CD4-positive, alpha-beta T cell (primary cell): ENCODE measurements at regions of chr17 and their contacts with region 1.

Region 1: GRCh38 chr17:28726226-28727130 is at the start of gene TLCD1:
- DNase-seq: peak; percentile 82 to 94 (median 86)
- ATAC-seq: peak; percentile 43
- H3K4me3 ChIP-seq: peak within 1 kb of the TSS; percentile 75
- H3K4me3 Mint-ChIP-seq: peak within 1 kb of the TSS; percentile 98
- H3K27ac ChIP-seq: peak within 1 kb of the TSS; percentile 99 to 100
- H3K27ac Mint-ChIP-seq: peak within 1 kb of the TSS; percentile 100
- H3K4me1 ChIP-seq: peaks cover 66% of the 10 kb centered on the region
- H3K4me1 Mint-ChIP-seq: peaks cover 64% of the 10 kb centered on the region
- H3K27me3 ChIP-seq: no peaks in the 10 kb centered on the region
- H3K27me3 Mint-ChIP-seq: no peaks in the 10 kb centered on the region
- CTCF ChIP-seq: peak; percentile 99
- total RNA-seq, gene TLCD1: 0.39 to 0.60 TPM

Region 2: DNA sequence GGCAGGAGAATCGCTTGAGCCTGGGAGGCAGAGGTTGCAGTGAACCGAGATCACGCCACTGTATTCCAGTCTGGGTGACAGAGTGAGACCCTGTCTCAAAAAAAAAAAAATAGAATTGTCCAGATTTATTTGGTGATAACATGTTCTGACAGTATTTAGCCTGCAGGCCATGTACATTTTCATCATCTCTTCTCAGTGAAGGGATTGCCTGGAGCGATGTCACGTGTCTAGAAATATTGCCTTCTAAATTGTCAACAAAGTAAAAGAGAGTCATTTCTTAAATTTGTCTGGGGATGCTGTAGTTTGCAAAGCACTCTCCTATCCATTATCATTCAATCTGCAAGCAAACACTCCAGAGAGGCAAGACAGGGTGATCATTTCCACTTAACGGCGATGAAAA is 701.7 kb before region 1 on chr17:
- CTCF ChIA-PET with region 1: no interaction called
- POLR2A ChIA-PET with region 1: no interaction called
- intact Hi-C with region 1: no loop called
- DNase-seq: no peak
- ATAC-seq: no peak
- H3K4me3 ChIP-seq: no peak overlapping the region
- H3K4me3 Mint-ChIP-seq: no peak overlapping the region
- H3K27ac ChIP-seq: no peak overlapping the region
- H3K27ac Mint-ChIP-seq: no peak overlapping the region
- H3K4me1 ChIP-seq: no peaks in the 10 kb centered on the region
- H3K4me1 Mint-ChIP-seq: no peaks in the 10 kb centered on the region
- H3K27me3 ChIP-seq: no peaks in the 10 kb centered on the region
- H3K27me3 Mint-ChIP-seq: peaks cover 5% of the 10 kb centered on the region
- CTCF ChIP-seq: no peak

Region 3: DNA sequence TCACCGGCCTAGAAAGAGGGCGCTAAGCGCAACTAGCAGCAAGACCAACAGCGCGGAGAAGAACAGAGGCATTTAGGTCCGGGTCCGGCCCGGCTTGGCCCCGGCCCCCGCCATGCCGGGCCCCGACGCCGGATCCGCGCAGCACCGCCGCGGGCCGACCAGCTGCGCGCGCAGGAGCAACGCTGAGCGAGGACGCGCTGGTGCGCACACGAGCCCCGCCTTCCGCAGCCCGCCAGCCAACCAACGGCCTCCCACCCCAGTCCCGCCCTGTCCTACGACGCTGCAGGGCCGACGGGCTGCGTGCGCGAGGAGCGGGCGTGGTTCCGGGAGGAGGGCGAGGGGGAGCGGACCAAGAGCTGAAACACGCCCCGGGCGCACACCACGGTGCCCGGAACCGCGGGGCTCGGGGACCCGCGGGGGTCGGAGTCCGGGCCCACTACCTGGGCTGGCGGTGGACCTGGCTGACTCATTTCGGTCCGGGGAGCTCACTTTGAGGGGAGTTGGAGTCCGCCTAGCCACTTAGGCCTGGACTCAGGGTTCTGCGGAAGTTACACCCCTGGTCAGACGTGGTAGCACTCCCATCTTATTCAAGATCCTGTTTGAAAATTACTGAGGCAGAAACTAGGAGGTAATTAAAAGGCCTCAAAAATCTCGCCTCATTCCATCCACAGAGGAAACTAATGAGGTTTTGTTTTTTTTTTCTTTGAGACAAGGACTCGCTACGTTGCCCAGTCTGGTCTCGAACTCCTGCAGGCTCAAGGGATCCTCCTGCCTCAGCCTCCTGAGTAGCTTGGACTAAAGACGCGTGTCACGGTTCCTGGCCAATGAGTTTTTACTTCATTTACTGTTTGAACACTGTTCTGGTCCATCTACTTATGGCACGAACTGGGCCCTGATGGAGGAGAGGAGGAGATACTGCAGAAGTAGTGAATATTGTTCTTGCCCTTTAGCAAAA is 81.2 kb before region 1 on chr17 and contains the start of gene BLTP2:
- CTCF ChIA-PET with region 1: interaction called, 14 read pairs
- POLR2A ChIA-PET with region 1: interaction called, 19 read pairs
- intact Hi-C with region 1: loop called in 1 of 2 experiments (anchors 5 kb)
- DNase-seq: peak; percentile 90 to 99 (median 96)
- ATAC-seq: peak; percentile 96
- H3K4me3 ChIP-seq: peak within 1 kb of the TSS; percentile 94
- H3K4me3 Mint-ChIP-seq: peak within 1 kb of the TSS; percentile 93
- H3K27ac ChIP-seq: peak within 1 kb of the TSS; percentile 76 to 96
- H3K27ac Mint-ChIP-seq: peak within 1 kb of the TSS; percentile 96
- H3K4me1 ChIP-seq: peaks cover 50% of the 10 kb centered on the region
- H3K4me1 Mint-ChIP-seq: peaks cover 38% of the 10 kb centered on the region
- H3K27me3 ChIP-seq: no peaks in the 10 kb centered on the region
- H3K27me3 Mint-ChIP-seq: no peaks in the 10 kb centered on the region
- CTCF ChIP-seq: no peak
- total RNA-seq, gene BLTP2: 120 to 124 TPM

Region 4: DNA sequence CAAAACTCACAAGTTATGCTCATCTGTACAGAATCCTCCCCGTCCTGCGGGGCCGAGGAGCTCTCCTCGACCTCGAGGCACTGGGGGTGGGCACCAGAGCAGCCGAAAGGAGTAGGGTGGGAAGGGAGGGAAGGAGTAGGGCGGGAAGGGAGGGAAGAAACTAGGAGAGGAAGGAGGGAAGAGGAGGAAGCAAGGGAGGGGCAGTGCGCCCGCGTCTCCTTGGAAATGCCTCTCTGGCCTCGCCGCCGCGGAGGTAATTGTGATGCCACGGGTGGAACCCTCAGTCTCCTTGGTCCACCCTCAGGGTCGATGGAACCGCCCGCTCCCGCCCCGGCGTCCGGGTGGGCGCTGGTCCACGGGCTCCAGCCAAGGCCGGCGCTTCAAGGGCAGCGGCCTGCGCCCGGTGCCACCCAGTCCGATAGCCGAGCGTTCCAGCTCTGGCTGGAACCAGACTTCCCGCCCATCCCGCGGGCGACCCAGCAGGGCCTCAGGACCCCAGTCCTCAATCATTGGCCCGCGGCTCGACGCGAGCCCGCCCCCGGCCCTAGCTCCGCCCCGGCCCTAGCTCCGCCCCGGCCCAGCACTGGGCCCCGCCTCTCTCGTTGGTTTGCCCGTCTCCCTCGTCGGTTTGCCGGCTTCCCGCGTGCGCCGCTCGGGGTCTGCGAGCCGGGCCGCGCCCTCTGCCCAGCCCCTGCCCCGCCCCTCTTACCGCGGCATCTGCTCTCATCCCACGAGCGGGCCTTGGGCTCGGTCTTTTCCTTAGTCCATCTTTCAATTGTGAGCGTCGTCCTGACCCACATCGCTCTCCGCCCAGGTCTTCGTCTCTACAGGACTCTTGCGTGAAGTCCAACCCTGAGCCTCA is 15.4 kb before region 1 on chr17:
- CTCF ChIA-PET with region 1: interaction called, 24 read pairs
- POLR2A ChIA-PET with region 1: interaction called, 110 read pairs
- intact Hi-C with region 1: no loop called
- DNase-seq: peak; percentile 78 to 93 (median 86)
- ATAC-seq: peak; percentile 92
- H3K4me3 ChIP-seq: peak overlapping the region; percentile 72
- H3K4me3 Mint-ChIP-seq: peak overlapping the region; percentile 94
- H3K27ac ChIP-seq: peak overlapping the region; percentile 68 to 73
- H3K27ac Mint-ChIP-seq: peak overlapping the region; percentile 87
- H3K4me1 ChIP-seq: peaks cover 18% of the 10 kb centered on the region
- H3K4me1 Mint-ChIP-seq: peaks cover 20% of the 10 kb centered on the region
- H3K27me3 ChIP-seq: peaks cover 4 to 5% of the 10 kb centered on the region in 2 experiments
- H3K27me3 Mint-ChIP-seq: peaks cover 17% of the 10 kb centered on the region
- CTCF ChIP-seq: no peak

Region 5: DNA sequence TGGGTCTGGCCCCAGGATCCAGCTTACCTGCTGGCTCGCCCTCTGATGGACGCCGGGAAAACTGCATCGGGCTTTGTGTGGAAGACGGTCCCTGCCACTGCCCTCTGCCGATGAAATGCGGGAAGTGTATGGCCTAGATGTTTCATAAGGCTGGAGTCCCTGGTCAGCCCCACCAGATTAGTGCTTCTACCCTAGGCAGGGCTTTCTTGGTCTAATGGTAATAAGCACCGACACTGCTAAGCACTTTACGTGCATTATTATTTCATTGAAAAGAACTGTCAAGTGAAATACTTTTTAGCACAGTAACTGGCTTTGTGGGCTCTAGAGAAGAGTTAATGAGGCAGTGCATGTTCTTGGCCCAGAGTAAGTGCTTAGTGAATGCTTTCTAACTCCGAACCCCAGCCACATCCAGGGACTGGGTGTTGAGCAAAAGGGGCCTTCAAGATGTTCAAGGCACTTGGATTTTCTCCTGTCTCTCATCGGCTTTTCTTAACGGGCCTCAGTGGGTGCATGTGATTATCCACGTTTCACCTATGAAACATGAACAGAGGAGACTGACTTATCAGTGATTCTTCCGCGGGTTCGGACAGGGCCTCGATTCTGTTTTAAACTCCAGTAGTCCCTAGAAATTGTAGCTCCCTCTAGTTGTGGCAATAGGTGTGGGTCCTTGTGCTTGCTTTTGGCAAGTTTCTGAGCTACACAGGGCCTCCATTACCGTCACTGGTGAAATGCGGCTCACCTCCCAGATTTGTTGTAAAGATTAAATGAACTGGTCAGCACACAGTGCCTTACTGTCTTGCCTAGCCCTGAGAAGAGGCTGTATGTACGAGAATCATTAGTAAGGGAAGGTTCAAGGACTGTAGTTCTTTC is 23.9 kb after region 1 on chr17:
- CTCF ChIA-PET with region 1: interaction called, 373 read pairs
- POLR2A ChIA-PET with region 1: interaction called, 268 read pairs
- intact Hi-C with region 1: loop called (anchors 1 kb)
- DNase-seq: peak; percentile 82 to 94 (median 86)
- ATAC-seq: peak; percentile 90
- H3K4me3 ChIP-seq: no peak overlapping the region
- H3K4me3 Mint-ChIP-seq: peak overlapping the region; percentile 42
- H3K27ac ChIP-seq: no peak overlapping the region
- H3K27ac Mint-ChIP-seq: peak overlapping the region; percentile 70
- H3K4me1 ChIP-seq: peaks cover 27% of the 10 kb centered on the region
- H3K4me1 Mint-ChIP-seq: peaks cover 21% of the 10 kb centered on the region
- H3K27me3 ChIP-seq: no peaks in the 10 kb centered on the region
- H3K27me3 Mint-ChIP-seq: no peaks in the 10 kb centered on the region
- CTCF ChIP-seq: peak; percentile 100

Region 6: DNA sequence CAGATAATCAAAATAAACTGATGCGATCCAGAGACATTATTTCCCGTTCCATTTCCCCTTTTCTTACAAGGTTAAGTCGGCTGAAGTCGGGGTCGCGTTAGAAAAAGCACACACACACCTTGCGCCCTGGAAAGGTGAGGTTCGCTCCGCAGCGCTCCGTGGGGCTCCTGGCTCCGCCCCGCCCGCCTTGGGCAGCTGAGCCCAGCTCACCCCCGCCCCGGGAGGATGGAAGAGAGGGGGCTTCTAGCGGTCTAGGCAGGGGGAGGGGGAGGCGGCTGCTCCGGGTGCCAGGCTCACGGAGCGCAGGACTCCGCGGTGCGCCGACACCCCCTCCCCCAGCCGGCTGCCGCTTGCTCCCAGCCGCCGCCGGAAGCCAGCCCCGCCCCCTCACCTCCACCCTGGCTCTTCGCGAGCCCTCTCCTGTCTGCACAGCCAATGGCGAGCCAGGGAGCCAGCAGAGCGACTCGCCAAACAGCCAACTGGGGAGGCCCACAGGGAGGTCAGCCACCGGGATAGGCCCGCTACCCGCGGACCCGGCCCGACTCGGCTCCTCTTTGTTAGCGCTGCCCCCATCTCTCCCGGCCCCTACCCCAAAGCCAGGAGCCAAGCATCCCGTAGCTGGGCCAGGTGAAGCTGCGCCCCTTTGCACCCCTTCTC is 85.7 kb after region 1 on chr17:
- CTCF ChIA-PET with region 1: interaction called, 16 read pairs
- POLR2A ChIA-PET with region 1: interaction called, 9 read pairs
- intact Hi-C with region 1: loop called (anchors 2 to 5 kb)
- DNase-seq: peak; percentile 91 to 98 (median 95)
- ATAC-seq: peak; percentile 95
- H3K4me3 ChIP-seq: peak overlapping the region; percentile 78
- H3K4me3 Mint-ChIP-seq: peak overlapping the region; percentile 92
- H3K27ac ChIP-seq: peak overlapping the region; percentile 91 to 93
- H3K27ac Mint-ChIP-seq: peak overlapping the region; percentile 90
- H3K4me1 ChIP-seq: peaks cover 15% of the 10 kb centered on the region
- H3K4me1 Mint-ChIP-seq: peaks cover 49% of the 10 kb centered on the region
- H3K27me3 ChIP-seq: no peaks in the 10 kb centered on the region
- H3K27me3 Mint-ChIP-seq: no peaks in the 10 kb centered on the region
- CTCF ChIP-seq: no peak

Region 7: DNA sequence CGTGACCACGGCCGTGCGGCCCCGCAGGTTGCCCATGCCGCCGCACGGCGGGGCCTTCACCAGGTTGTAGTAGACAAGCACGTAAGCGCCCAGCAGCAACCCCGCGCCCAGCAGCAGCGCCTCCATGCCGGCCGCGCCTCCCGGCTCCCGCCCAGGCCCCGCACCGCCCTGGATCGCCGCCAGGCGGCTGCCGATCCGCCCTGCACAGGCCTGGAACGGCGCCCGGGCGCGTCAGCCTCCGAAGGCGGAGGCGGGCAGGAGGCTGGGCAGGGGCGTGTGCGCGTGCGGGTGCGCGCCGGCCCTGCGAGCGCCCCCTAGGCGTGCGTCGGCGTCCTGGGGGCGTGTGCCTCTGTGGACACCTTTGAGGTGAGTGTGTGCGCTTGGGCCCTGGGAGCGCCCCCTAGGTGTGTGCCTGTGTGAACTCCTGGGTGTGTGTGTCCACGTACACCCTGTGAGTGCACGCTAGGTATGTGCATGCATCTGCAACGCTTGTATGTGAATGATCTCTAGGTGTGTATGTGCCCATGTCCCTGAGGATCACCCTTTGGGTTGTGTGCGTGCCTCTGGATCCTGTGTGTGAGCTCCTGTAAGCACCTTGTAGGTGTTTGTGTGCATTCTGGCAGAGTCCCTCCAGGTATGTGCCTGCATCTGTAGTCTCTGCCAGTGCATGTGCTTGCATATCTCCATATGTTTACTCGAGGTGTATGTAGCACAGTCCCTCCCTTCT is 176.5 kb after region 1 on chr17 and contains the start of gene DHRS13:
- CTCF ChIA-PET with region 1: interaction called, 12 read pairs
- POLR2A ChIA-PET with region 1: interaction called, 15 read pairs
- intact Hi-C with region 1: loop called in 1 of 2 experiments (anchors 1 kb)
- DNase-seq: peak; percentile 88 to 99 (median 95)
- ATAC-seq: peak; percentile 88
- H3K4me3 ChIP-seq: peak within 1 kb of the TSS; percentile 79
- H3K4me3 Mint-ChIP-seq: peak within 1 kb of the TSS; percentile 85
- H3K27ac ChIP-seq: peak within 1 kb of the TSS; percentile 71 to 76
- H3K27ac Mint-ChIP-seq: peak within 1 kb of the TSS; percentile 85
- H3K4me1 ChIP-seq: peaks cover 36% of the 10 kb centered on the region
- H3K4me1 Mint-ChIP-seq: peaks cover 35% of the 10 kb centered on the region
- H3K27me3 ChIP-seq: no peaks in the 10 kb centered on the region
- H3K27me3 Mint-ChIP-seq: no peaks in the 10 kb centered on the region
- CTCF ChIP-seq: peak; percentile 93
- total RNA-seq, gene DHRS13: 33.5 to 34.3 TPM

Region 8: DNA sequence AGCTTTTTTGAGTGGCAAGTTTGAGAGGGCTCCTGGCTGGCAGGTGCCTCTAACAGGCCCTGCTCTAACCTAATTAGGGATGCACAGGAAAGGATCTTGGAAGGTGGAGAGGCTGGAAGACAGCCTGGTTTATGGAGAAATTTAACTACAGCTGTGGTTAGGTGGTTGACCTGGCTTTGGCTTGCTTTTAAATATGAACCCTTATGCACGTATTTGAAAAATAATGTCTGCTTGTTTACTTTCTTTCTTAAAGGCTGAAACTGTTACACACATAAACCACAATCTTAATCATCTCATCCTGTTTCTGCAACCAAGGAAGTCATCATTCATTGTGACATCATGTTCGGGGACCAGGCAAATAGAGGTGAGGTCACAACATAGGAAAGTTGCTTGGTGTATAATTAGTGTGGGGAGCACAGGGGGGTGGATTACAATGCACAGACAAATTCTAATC is 199.5 kb after region 1 on chr17:
- CTCF ChIA-PET with region 1: interaction called, 11 read pairs
- POLR2A ChIA-PET with region 1: interaction called, 23 read pairs
- intact Hi-C with region 1: loop called in 1 of 2 experiments (anchors 5 kb)
- DNase-seq: peak in 12 of 14 experiments; percentile 20 to 95 (median 41)
- ATAC-seq: peak; percentile 91
- H3K4me3 ChIP-seq: peak overlapping the region; percentile 22
- H3K4me3 Mint-ChIP-seq: peak overlapping the region; percentile 43
- H3K27ac ChIP-seq: peak overlapping the region; percentile 91 to 92
- H3K27ac Mint-ChIP-seq: peak overlapping the region; percentile 98
- H3K4me1 ChIP-seq: peaks cover 52% of the 10 kb centered on the region
- H3K4me1 Mint-ChIP-seq: peaks cover 66% of the 10 kb centered on the region
- H3K27me3 ChIP-seq: no peaks in the 10 kb centered on the region
- H3K27me3 Mint-ChIP-seq: no peaks in the 10 kb centered on the region
- CTCF ChIP-seq: no peak

Region 9: DNA sequence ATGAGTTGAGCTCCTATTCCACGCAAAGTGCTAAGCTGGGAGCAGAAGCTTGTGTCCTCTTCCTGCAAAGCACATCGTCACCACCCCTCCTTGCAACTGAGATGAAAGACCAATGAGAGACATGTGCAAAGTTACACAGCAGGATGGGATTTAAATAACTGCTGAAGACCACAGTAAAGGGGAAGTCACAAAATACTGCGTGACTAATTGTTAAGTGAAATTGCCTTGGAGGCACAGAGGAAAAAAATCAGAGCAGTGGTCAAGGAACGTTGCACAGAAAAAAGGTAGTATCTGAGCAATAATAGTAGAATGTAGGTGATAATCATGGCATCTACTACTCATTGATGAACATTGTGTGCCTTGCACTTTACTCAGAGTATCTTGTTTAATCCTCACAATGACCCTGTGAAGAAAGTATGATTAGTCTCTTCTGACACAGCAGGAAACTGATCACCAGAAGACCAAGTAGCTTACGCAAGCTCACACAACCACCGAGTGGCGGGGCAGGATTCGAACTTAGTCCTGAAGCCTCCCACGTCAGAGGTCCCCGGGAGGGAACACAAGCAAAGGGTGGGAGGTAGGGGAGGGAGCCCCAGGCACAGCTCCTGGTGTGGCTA is 469.1 kb after region 1 on chr17:
- CTCF ChIA-PET with region 1: no interaction called
- POLR2A ChIA-PET with region 1: no interaction called
- intact Hi-C with region 1: no loop called
- DNase-seq: peak in 2 of 14 experiments; percentile 49 to 53
- ATAC-seq: no peak
- H3K4me3 ChIP-seq: no peak overlapping the region
- H3K4me3 Mint-ChIP-seq: no peak overlapping the region
- H3K27ac ChIP-seq: no peak overlapping the region
- H3K27ac Mint-ChIP-seq: no peak overlapping the region
- H3K4me1 ChIP-seq: no peaks in the 10 kb centered on the region
- H3K4me1 Mint-ChIP-seq: no peaks in the 10 kb centered on the region
- H3K27me3 ChIP-seq: peaks cover 2 to 5% of the 10 kb centered on the region in 2 experiments
- H3K27me3 Mint-ChIP-seq: peaks cover 11% of the 10 kb centered on the region
- CTCF ChIP-seq: no peak